CD14-positive monocyte (primary cell): ENCODE measurements at regions of chr4 and their contacts with region 1.

Region 1: GRCh38 chr4:158496030-158496741 is 25.5 kb upstream of the RXFP1 start:
- DNase-seq: peak; percentile 15 to 50 (median 38)
- H3K4me3 ChIP-seq: no peak overlapping the region
- H3K4me3 Mint-ChIP-seq: no peak overlapping the region
- H3K27ac ChIP-seq: no peak overlapping the region
- H3K27ac Mint-ChIP-seq: no peak overlapping the region
- H3K4me1 ChIP-seq: no peaks in the 10 kb centered on the region
- H3K4me1 Mint-ChIP-seq: no peaks in the 10 kb centered on the region
- H3K27me3 ChIP-seq: no peaks in the 10 kb centered on the region
- H3K27me3 Mint-ChIP-seq: no peaks in the 10 kb centered on the region
- CTCF ChIP-seq: peak; percentile 92

Region 2: DNA sequence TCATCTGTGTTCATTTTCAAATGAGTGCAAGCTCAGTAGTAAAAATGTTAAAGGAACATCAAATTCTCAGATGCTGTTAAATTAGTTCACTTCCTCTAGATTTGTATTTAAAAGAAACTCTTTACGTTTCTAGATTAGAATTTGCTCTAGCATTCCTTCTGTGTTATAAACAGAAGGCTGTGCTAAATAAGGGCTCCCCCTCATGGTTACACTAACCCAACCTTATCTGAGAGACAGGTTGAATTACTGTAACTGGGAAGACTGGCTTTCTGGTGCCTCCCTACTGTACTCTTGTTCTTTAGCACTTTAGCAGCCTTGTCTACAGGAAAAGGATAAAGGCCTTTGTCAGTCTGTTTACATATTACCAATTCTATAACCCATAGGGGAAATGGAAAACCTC is 82.3 kb after region 1 on chr4:
- intact Hi-C with region 1: loop called in 1 of 2 experiments (anchors 10 kb)
- DNase-seq: no peak
- H3K4me3 ChIP-seq: no peak overlapping the region
- H3K4me3 Mint-ChIP-seq: no peak overlapping the region
- H3K27ac ChIP-seq: no peak overlapping the region
- H3K27ac Mint-ChIP-seq: no peak overlapping the region
- H3K4me1 ChIP-seq: no peaks in the 10 kb centered on the region
- H3K4me1 Mint-ChIP-seq: no peaks in the 10 kb centered on the region
- H3K27me3 ChIP-seq: no peaks in the 10 kb centered on the region
- H3K27me3 Mint-ChIP-seq: peaks cover 0 to 2% (median 0%) of the 10 kb centered on the region in 3 donors
- CTCF ChIP-seq: peak; percentile 20

Region 3: GRCh38 chr4:158624889-158625478 is 128.8 kb after region 1 on chr4:
- intact Hi-C with region 1: loop called (anchors 5 to 10 kb)
- DNase-seq: peak; percentile 54 to 79 (median 70)
- H3K4me3 ChIP-seq: no peak overlapping the region
- H3K4me3 Mint-ChIP-seq: no peak overlapping the region
- H3K27ac ChIP-seq: no peak overlapping the region
- H3K27ac Mint-ChIP-seq: no peak overlapping the region
- H3K4me1 ChIP-seq: no peaks in the 10 kb centered on the region
- H3K4me1 Mint-ChIP-seq: no peaks in the 10 kb centered on the region
- H3K27me3 ChIP-seq: no peaks in the 10 kb centered on the region
- H3K27me3 Mint-ChIP-seq: peaks cover 0 to 2% (median 2%) of the 10 kb centered on the region in 3 donors
- CTCF ChIP-seq: peak; percentile 82